MCF 10A (cell line): ENCODE measurements at regions of chr5 and their contacts with region 1.

Region 1: GRCh38 chr5:129125810-129126209 is 31.3 kb downstream of the ISOC1 start:
- DNase-seq: no peak
- H3K4me3 Mint-ChIP-seq: no peak overlapping the region
- H3K27ac Mint-ChIP-seq: no peak overlapping the region
- H3K4me1 Mint-ChIP-seq: peaks cover 8% of the 10 kb centered on the region
- H3K27me3 Mint-ChIP-seq: no peaks in the 10 kb centered on the region
- CTCF ChIP-seq: no peak

Region 2: GRCh38 chr5:129094087-129094923 is 31.5 kb before region 1 on chr5 and contains the start of gene ISOC1:
- CTCF ChIA-PET with region 1: interaction called, 24 read pairs
- POLR2A ChIA-PET with region 1: interaction called, 9 read pairs
- intact Hi-C with region 1: no loop called
- DNase-seq: peak; percentile 94
- H3K4me3 Mint-ChIP-seq: peak within 1 kb of the TSS; percentile 84
- H3K27ac Mint-ChIP-seq: peak within 1 kb of the TSS; percentile 46
- H3K4me1 Mint-ChIP-seq: peaks cover 20% of the 10 kb centered on the region
- H3K27me3 Mint-ChIP-seq: peaks cover 21% of the 10 kb centered on the region
- CTCF ChIP-seq: no peak
- total RNA-seq, gene ISOC1: 11.2 and 12.8 TPM in 2 replicates

Region 3: GRCh38 chr5:129113871-129114270 is 11.9 kb before region 1 on chr5:
- CTCF ChIA-PET with region 1: interaction called, 39 read pairs
- POLR2A ChIA-PET with region 1: interaction called, 4 read pairs
- intact Hi-C with region 1: no loop called
- DNase-seq: no peak
- H3K4me3 Mint-ChIP-seq: no peak overlapping the region
- H3K27ac Mint-ChIP-seq: no peak overlapping the region
- H3K4me1 Mint-ChIP-seq: no peaks in the 10 kb centered on the region
- H3K27me3 Mint-ChIP-seq: no peaks in the 10 kb centered on the region
- CTCF ChIP-seq: no peak

Region 4: GRCh38 chr5:129481161-129481560 is 355.4 kb after region 1 on chr5:
- CTCF ChIA-PET with region 1: no interaction called
- POLR2A ChIA-PET with region 1: no interaction called
- intact Hi-C with region 1: loop called (anchors 5 kb)
- DNase-seq: no peak
- H3K4me3 Mint-ChIP-seq: no peak overlapping the region
- H3K27ac Mint-ChIP-seq: no peak overlapping the region
- H3K4me1 Mint-ChIP-seq: no peaks in the 10 kb centered on the region
- H3K27me3 Mint-ChIP-seq: peaks cover 35% of the 10 kb centered on the region
- CTCF ChIP-seq: no peak